CD8-positive, alpha-beta T cell (primary cell): ENCODE measurements at regions of chr18 and their contacts with region 1.

Region 1: GRCh38 chr18:23586249-23587196 is at the start of gene NPC1:
- DNase-seq: peak; percentile 84 to 96 (median 91)
- ATAC-seq: peak; percentile 88
- H3K4me3 ChIP-seq: peak within 1 kb of the TSS; percentile 99 to 100
- H3K4me3 Mint-ChIP-seq: peak within 1 kb of the TSS; percentile 95
- H3K27ac ChIP-seq: peak within 1 kb of the TSS; percentile 99 to 100
- H3K27ac Mint-ChIP-seq: peak within 1 kb of the TSS; percentile 97
- H3K4me1 ChIP-seq: peaks cover 24% of the 10 kb centered on the region
- H3K4me1 Mint-ChIP-seq: peaks cover 41% of the 10 kb centered on the region
- H3K27me3 ChIP-seq: no peaks in the 10 kb centered on the region
- H3K27me3 Mint-ChIP-seq: no peaks in the 10 kb centered on the region
- CTCF ChIP-seq: peak; percentile 99
- total RNA-seq, gene NPC1: 37.3 to 38.9 TPM

Region 2: GRCh38 chr18:23437357-23438045 is 149.0 kb before region 1 on chr18:
- CTCF ChIA-PET with region 1: no interaction called
- POLR2A ChIA-PET with region 1: no interaction called
- intact Hi-C with region 1: loop called (anchors 5 kb)
- DNase-seq: peak; percentile 46 to 81 (median 77)
- ATAC-seq: peak; percentile 95
- H3K4me3 ChIP-seq: peak overlapping the region; percentile 81 to 96
- H3K4me3 Mint-ChIP-seq: peak overlapping the region; percentile 88
- H3K27ac ChIP-seq: peak overlapping the region in 1 of 2 experiments; percentile 21
- H3K27ac Mint-ChIP-seq: no peak overlapping the region
- H3K4me1 ChIP-seq: peaks cover 17% of the 10 kb centered on the region
- H3K4me1 Mint-ChIP-seq: peaks cover 22% of the 10 kb centered on the region
- H3K27me3 ChIP-seq: peaks cover 0 to 2% of the 10 kb centered on the region in 2 experiments
- H3K27me3 Mint-ChIP-seq: no peaks in the 10 kb centered on the region
- CTCF ChIP-seq: no peak

Region 3: GRCh38 chr18:23515911-23516546 is 70.5 kb before region 1 on chr18:
- CTCF ChIA-PET with region 1: interaction called, 81 read pairs
- POLR2A ChIA-PET with region 1: interaction called, 6 read pairs
- intact Hi-C with region 1: loop called (anchors 1 kb)
- DNase-seq: peak; percentile 49 to 87 (median 76)
- ATAC-seq: peak; percentile 99
- H3K4me3 ChIP-seq: no peak overlapping the region
- H3K4me3 Mint-ChIP-seq: no peak overlapping the region
- H3K27ac ChIP-seq: peak overlapping the region in 1 of 2 experiments; percentile 20
- H3K27ac Mint-ChIP-seq: peak overlapping the region; percentile 70
- H3K4me1 ChIP-seq: no peaks in the 10 kb centered on the region
- H3K4me1 Mint-ChIP-seq: peaks cover 15% of the 10 kb centered on the region
- H3K27me3 ChIP-seq: no peaks in the 10 kb centered on the region
- H3K27me3 Mint-ChIP-seq: no peaks in the 10 kb centered on the region
- CTCF ChIP-seq: peak; percentile 86

Region 4: GRCh38 chr18:23563377-23564043 is 23.0 kb before region 1 on chr18:
- CTCF ChIA-PET with region 1: interaction called, 4 read pairs
- POLR2A ChIA-PET with region 1: no interaction called
- intact Hi-C with region 1: loop called in 1 of 2 experiments (anchors 1 kb)
- DNase-seq: peak in 2 of 9 experiments; percentile 63 to 75
- ATAC-seq: peak; percentile 86
- H3K4me3 ChIP-seq: no peak overlapping the region
- H3K4me3 Mint-ChIP-seq: no peak overlapping the region
- H3K27ac ChIP-seq: peak overlapping the region in 1 of 2 experiments; percentile 34
- H3K27ac Mint-ChIP-seq: peak overlapping the region; percentile 29
- H3K4me1 ChIP-seq: peaks cover 5% of the 10 kb centered on the region
- H3K4me1 Mint-ChIP-seq: peaks cover 4% of the 10 kb centered on the region
- H3K27me3 ChIP-seq: no peaks in the 10 kb centered on the region
- H3K27me3 Mint-ChIP-seq: no peaks in the 10 kb centered on the region
- CTCF ChIP-seq: no peak

Region 5: DNA sequence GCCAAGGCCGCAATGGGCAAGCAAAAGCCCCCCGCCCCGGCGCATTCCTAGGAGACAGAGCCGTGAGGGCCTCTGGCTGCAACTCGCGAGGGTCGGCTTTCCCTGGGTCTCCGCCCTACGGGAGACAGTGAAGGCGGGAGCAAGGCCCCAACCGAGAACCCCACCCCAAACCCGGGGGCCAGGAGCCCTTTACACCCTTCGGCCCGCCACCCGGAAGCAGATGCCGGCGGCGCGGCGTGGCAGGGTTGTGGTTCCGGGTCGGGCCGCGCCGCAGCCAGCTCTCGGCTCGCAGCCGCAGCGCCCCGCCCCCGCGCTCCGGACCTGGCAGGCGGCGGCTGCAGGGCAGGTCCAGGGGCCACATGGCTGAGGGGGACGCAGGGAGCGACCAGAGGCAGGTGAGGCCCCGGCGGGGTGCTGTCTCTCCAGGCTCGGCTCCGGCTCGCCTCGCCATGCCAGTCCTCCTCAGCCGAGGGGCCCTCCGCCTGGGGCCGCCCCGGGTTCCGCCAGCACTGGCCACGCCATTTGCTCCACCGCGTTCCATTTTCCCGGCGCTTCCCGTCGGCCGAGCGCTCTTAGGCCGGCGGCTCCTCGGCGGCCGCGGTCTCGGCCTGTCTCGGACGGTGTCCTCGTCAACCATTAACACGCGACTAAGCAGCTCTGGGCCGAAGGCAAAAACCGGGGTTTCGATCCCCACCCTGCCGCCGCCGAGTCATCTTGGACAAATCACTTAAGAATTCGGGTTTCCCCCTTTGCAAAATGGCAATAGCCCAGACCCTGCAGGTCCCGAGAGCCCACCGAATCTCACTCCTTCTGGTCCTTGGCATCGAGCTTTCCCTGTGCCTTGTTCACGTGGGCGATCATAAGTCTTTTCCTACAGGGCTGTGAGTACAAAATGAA is 840.1 kb after region 1 on chr18 and contains the start of gene IMPACT:
- CTCF ChIA-PET with region 1: no interaction called
- POLR2A ChIA-PET with region 1: no interaction called
- intact Hi-C with region 1: loop called in 1 of 2 experiments (anchors 10 kb)
- DNase-seq: peak; percentile 56 to 90 (median 76)
- ATAC-seq: peak; percentile 83
- H3K4me3 ChIP-seq: peak within 1 kb of the TSS; percentile 73 to 81
- H3K4me3 Mint-ChIP-seq: peak within 1 kb of the TSS; percentile 87
- H3K27ac ChIP-seq: peak within 1 kb of the TSS; percentile 43 to 64
- H3K27ac Mint-ChIP-seq: peak within 1 kb of the TSS; percentile 92
- H3K4me1 ChIP-seq: peaks cover 24% of the 10 kb centered on the region
- H3K4me1 Mint-ChIP-seq: peaks cover 21% of the 10 kb centered on the region
- H3K27me3 ChIP-seq: peaks cover 0 to 3% of the 10 kb centered on the region in 2 experiments
- H3K27me3 Mint-ChIP-seq: peaks cover 25% of the 10 kb centered on the region
- CTCF ChIP-seq: no peak
- total RNA-seq, gene IMPACT: 6.5 to 10.0 TPM